CD8-positive, alpha-beta T cell (primary cell): ENCODE measurements at regions of chr15 and their contacts with region 1.

Region 1: DNA sequence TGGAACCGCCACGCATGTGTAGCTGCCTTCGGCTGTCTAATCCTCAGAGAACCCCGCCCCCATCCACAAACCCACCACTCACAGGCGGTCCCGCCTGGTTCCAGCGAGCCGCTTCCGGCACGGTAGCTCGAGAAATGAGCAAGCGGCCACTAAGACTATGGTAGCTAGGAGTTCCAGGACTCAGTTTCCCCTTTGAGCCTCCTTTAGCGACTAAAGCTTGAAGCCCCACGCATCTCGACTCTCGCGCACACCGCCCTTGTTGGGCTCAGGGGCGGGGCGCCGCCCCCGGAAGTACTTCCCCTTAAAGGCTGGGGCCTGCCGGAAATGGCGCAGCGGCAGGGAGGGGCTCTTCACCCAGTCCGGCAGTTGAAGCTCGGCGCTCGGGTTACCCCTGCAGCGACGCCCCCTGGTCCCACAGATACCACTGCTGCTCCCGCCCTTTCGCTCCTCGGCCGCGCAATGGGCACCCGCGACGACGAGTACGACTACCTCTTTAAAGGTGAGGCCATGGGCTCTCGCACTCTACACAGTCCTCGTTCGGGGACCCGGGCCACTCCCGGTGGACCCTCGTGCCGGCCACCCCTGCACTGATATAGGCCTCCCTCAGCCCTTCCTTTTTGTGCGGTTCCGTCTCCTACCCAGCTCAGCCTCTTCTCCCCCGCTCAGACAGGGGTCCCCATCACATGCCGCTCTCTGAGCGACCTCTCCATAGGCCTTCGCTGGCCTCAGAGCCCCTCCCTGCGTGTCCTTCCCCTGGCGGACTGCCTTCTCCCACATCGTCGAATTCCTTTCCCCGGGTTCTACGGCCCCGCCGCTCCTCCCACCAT is at the start of gene RAB11A:
- DNase-seq: peak; percentile 86 to 98 (median 94)
- ATAC-seq: peak; percentile 88
- H3K4me3 ChIP-seq: peak within 1 kb of the TSS; percentile 84 to 98
- H3K4me3 Mint-ChIP-seq: peak within 1 kb of the TSS; percentile 99
- H3K27ac ChIP-seq: peak within 1 kb of the TSS; percentile 90 to 94
- H3K27ac Mint-ChIP-seq: peak within 1 kb of the TSS; percentile 94
- H3K4me1 ChIP-seq: peaks cover 24% of the 10 kb centered on the region
- H3K4me1 Mint-ChIP-seq: peaks cover 31% of the 10 kb centered on the region
- H3K27me3 ChIP-seq: no peaks in the 10 kb centered on the region
- H3K27me3 Mint-ChIP-seq: no peaks in the 10 kb centered on the region
- CTCF ChIP-seq: peak; percentile 42
- total RNA-seq, gene RAB11A: 85.9 to 88.3 TPM

Region 2: DNA sequence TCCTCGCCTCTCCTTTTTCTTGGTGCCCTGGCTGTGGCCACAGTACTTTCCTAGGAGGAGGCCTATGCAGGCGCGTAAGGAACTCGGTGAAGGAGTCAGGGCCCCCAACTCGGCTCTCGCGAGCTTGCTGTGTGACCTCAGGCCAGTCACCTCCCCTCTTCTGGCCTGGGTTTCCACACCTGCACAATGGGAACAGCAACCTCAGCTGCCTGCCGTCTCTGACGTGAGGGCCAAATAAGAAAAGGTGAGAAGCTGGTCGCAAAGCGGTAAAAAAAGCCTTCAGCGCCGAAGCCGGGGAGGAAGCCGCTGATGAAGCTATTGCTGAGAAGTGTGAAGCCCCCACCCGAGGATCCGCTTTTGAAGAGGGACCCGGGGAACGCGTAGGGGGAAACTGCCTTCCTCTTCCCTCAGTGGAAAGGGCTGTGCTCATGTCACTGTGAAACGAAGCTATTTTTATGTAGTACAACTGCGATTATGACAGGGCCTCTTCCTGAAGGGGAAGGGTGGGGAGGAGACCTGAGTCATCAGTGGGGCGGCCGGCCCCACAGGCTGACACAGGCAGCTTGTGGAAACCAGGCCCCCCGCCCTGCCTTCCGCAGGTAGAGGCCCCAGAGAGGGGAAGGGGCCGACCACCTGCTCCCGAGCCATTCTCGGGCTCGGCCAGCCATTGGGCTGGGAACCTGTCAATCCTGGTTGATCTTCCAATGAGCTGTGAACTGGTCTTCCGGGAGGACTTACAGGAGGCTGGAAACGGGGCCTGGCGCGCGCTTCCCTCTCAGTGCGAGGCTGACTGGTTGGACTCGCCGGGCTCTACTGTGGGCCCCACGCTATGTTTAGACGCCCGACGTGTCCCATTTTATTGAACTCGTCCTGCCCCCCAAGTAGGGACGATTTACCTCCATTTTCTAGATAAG is 975.6 kb before region 1 on chr15:
- CTCF ChIA-PET with region 1: no interaction called
- POLR2A ChIA-PET with region 1: no interaction called
- intact Hi-C with region 1: loop called in 1 of 2 experiments (anchors 5 kb)
- DNase-seq: peak; percentile 82 to 98 (median 95)
- ATAC-seq: peak; percentile 70
- H3K4me3 ChIP-seq: peak overlapping the region; percentile 42 to 64
- H3K4me3 Mint-ChIP-seq: peak overlapping the region; percentile 87
- H3K27ac ChIP-seq: peak overlapping the region; percentile 73 to 88
- H3K27ac Mint-ChIP-seq: peak overlapping the region; percentile 99
- H3K4me1 ChIP-seq: peaks cover 57% of the 10 kb centered on the region
- H3K4me1 Mint-ChIP-seq: peaks cover 66% of the 10 kb centered on the region
- H3K27me3 ChIP-seq: no peaks in the 10 kb centered on the region
- H3K27me3 Mint-ChIP-seq: no peaks in the 10 kb centered on the region
- CTCF ChIP-seq: no peak

Region 3: GRCh38 chr15:65516997-65517865 is 352.1 kb before region 1 on chr15 and contains the start of gene DPP8:
- CTCF ChIA-PET with region 1: no interaction called
- POLR2A ChIA-PET with region 1: interaction called, 5 read pairs
- intact Hi-C with region 1: loop called (anchors 1 kb)
- DNase-seq: peak; percentile 93 to 97 (median 94)
- ATAC-seq: peak; percentile 90
- H3K4me3 ChIP-seq: peak within 1 kb of the TSS; percentile 98 to 99
- H3K4me3 Mint-ChIP-seq: peak within 1 kb of the TSS; percentile 96
- H3K27ac ChIP-seq: peak within 1 kb of the TSS; percentile 72 to 93
- H3K27ac Mint-ChIP-seq: peak within 1 kb of the TSS; percentile 96
- H3K4me1 ChIP-seq: peaks cover 32% of the 10 kb centered on the region
- H3K4me1 Mint-ChIP-seq: peaks cover 49% of the 10 kb centered on the region
- H3K27me3 ChIP-seq: no peaks in the 10 kb centered on the region
- H3K27me3 Mint-ChIP-seq: no peaks in the 10 kb centered on the region
- CTCF ChIP-seq: peak; percentile 82
- total RNA-seq, gene DPP8: 30.5 to 38.1 TPM

Region 4: DNA sequence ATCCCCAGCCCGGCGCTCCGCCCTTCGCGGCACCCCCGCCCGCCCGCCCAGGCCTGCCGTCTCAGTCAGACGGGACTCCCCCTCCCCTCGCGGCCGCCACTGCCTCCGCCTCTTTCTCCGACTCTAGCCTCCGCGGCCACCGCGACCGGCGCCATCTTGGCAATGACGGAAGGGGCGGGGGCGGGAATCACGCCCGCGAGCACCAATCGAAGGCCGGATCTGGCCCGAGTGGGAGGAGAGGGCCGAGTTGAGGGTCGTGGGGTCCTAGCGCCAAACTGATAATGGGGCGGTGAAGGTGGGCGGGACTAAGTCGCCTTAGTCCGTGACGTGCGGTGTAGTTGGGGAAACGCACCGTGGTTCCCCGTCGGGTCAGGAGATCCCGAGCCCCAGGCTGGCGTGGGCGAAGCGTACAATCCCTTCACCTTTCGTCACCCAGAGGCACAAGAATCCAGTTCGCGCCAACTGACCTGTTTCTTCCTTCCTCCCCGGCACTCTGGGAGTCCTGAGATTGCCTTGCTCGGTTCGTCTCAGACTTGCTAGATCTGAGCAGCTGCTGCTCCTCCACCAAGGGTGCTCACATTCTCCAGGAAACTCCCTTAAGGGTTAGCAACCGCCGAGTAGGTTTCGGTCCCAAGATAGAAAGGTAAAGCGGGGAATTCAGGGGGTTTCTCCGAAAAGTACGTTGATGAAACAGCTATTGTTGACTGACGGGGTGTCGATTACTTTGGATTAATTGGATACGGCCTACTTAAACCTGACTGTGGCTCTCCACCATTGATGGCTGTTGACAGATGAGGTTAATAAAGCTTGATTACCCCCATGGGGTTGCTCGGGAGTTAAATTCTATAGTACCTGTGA is 77.0 kb before region 1 on chr15 and contains the start of gene DENND4A:
- CTCF ChIA-PET with region 1: interaction called, 3 read pairs
- POLR2A ChIA-PET with region 1: interaction called, 8 read pairs
- intact Hi-C with region 1: loop called (anchors 1 kb)
- DNase-seq: peak; percentile 97 to 100 (median 98)
- ATAC-seq: peak; percentile 83
- H3K4me3 ChIP-seq: peak within 1 kb of the TSS; percentile 79 to 85
- H3K4me3 Mint-ChIP-seq: peak within 1 kb of the TSS; percentile 88
- H3K27ac ChIP-seq: peak within 1 kb of the TSS; percentile 96 to 97
- H3K27ac Mint-ChIP-seq: peak within 1 kb of the TSS; percentile 98
- H3K4me1 ChIP-seq: peaks cover 31% of the 10 kb centered on the region
- H3K4me1 Mint-ChIP-seq: peaks cover 42% of the 10 kb centered on the region
- H3K27me3 ChIP-seq: no peaks in the 10 kb centered on the region
- H3K27me3 Mint-ChIP-seq: no peaks in the 10 kb centered on the region
- CTCF ChIP-seq: no peak
- total RNA-seq, gene DENND4A: 105 TPM

Region 5: DNA sequence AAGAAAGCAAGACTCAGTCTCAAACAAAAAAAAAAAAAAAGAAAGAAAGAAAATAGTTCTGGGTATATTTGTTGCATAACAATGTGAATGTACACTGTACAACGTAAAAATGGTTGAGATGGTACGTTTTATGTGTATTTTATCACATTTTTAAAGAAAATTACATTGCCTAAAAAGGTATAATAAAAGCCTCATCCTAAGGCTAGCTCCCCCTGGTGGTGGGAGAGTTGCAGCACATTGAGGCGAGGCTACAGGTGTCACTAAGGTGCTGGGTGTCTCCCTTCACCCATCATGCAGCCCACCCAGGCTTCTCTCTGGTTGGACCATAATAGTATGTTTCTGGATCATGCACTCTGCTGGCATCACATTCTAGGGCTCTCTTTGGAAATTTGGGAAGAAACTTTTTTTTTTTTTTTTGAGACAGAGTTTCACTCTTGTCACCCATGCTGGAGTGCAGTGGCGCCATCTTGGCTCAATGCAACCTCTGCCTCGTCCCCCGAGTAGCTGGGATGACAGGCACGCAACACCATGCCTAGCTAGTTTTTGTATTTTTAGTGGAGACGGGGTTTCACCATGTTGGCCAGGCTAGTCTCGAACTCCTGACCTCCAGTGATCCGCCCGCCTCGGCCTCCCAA is 12.4 kb before region 1 on chr15:
- CTCF ChIA-PET with region 1: interaction called, 13 read pairs
- POLR2A ChIA-PET with region 1: interaction called, 3 read pairs
- intact Hi-C with region 1: no loop called
- DNase-seq: peak; percentile 59 to 88 (median 84)
- ATAC-seq: peak; percentile 87
- H3K4me3 ChIP-seq: no peak overlapping the region
- H3K4me3 Mint-ChIP-seq: no peak overlapping the region
- H3K27ac ChIP-seq: no peak overlapping the region
- H3K27ac Mint-ChIP-seq: no peak overlapping the region
- H3K4me1 ChIP-seq: no peaks in the 10 kb centered on the region
- H3K4me1 Mint-ChIP-seq: peaks cover 11% of the 10 kb centered on the region
- H3K27me3 ChIP-seq: no peaks in the 10 kb centered on the region
- H3K27me3 Mint-ChIP-seq: no peaks in the 10 kb centered on the region
- CTCF ChIP-seq: peak; percentile 80

Region 6: GRCh38 chr15:65939901-65940617 is 70.7 kb after region 1 on chr15:
- CTCF ChIA-PET with region 1: no interaction called
- POLR2A ChIA-PET with region 1: no interaction called
- intact Hi-C with region 1: no loop called
- DNase-seq: no peak
- ATAC-seq: no peak
- H3K4me3 ChIP-seq: no peak overlapping the region
- H3K4me3 Mint-ChIP-seq: no peak overlapping the region
- H3K27ac ChIP-seq: no peak overlapping the region
- H3K27ac Mint-ChIP-seq: no peak overlapping the region
- H3K4me1 ChIP-seq: no peaks in the 10 kb centered on the region
- H3K4me1 Mint-ChIP-seq: no peaks in the 10 kb centered on the region
- H3K27me3 ChIP-seq: no peaks in the 10 kb centered on the region
- H3K27me3 Mint-ChIP-seq: peaks cover 3% of the 10 kb centered on the region
- CTCF ChIP-seq: no peak

Region 7: GRCh38 chr15:66293419-66294156 is 424.2 kb after region 1 on chr15 and contains the start of gene DIS3L:
- CTCF ChIA-PET with region 1: interaction called, 3 read pairs
- POLR2A ChIA-PET with region 1: no interaction called
- intact Hi-C with region 1: loop called (anchors 10 kb)
- DNase-seq: peak; percentile 21 to 83 (median 60)
- ATAC-seq: peak; percentile 72
- H3K4me3 ChIP-seq: peak within 1 kb of the TSS; percentile 67 to 72
- H3K4me3 Mint-ChIP-seq: peak within 1 kb of the TSS; percentile 86
- H3K27ac ChIP-seq: peak within 1 kb of the TSS; percentile 86 to 95
- H3K27ac Mint-ChIP-seq: peak within 1 kb of the TSS; percentile 93
- H3K4me1 ChIP-seq: peaks cover 39% of the 10 kb centered on the region
- H3K4me1 Mint-ChIP-seq: peaks cover 49% of the 10 kb centered on the region
- H3K27me3 ChIP-seq: no peaks in the 10 kb centered on the region
- H3K27me3 Mint-ChIP-seq: no peaks in the 10 kb centered on the region
- CTCF ChIP-seq: no peak
- total RNA-seq, gene DIS3L: 16.6 to 18.8 TPM